ENCODE measurements at regions of chr11 and their contacts with region 1.

Region 1: DNA sequence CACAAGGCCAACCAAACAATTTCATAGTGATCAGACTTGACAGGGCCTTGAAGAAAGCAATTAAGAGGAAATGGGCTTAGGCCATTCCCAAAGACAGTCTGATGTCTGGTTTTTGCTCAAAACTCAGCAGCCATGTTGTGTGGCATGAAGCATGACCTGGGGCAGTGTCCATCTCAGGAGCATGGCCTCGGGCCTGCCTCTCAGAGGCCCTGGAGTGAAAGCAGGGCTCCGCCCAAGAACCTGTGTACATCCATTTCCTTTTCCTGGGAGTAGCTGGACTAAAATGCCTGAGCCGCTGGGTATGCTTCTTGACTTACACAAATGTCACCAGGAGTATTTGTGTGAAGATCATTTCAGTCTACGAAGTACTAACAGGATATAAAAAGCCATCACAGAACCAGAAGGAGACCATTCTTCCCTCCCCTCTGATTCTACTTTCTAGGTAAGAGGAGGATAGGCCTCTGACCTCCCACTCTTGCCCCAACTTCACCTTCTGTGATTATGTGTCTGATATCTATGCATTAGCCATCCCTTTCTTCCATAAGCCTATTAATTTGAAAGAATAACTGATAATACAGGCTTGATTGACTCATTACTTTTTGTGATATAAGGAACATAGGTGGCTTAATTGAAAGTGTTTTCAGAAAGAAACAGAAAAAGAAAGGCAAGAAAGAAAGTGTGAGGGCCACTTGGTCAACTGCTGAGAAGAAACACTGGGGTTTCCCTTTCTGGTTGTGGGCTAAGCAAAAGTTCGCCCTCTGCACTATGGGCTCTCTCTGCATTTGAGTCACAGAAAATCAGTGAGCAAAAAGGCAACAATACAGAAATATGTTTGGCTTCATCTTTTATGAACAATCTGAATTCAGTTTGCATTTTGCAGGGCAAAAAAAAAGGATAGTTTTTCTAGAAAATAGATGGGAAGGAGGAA is 188.6 kb upstream of the MTMR2 start:
- DNase-seq: no peak
- H3K4me3 ChIP-seq: no peak overlapping the region
- H3K27ac ChIP-seq: peak overlapping the region; percentile 58 to 80 (median 76)
- H3K4me1 ChIP-seq: peaks cover 0 to 33% (median 29%) of the 10 kb centered on the region in 4 donors
- H3K27me3 ChIP-seq: no peaks in the 10 kb centered on the region
- CTCF ChIP-seq: no peak
- EP300 ChIP-seq: no peak
- POLR2A ChIP-seq: no peak

Region 2: DNA sequence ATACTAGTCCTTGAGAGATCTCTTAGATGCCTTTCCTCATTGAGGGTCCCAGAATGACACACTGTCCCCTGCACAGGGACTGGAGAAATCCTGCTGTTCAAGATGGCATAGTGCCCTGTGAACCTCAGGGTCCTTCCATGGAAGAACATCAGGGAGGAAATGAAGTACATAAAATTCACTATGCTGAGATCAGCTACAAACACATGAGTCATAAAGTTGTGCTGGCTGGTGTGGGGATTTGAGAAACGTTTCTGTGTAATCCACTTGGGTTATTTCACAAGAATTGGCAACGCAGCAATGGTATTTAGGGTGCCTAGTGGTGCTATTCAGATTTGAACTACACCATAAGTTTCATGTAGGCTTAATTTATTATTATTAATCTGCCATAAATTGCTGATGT is 56.2 kb after region 1 on chr11:
- intact Hi-C with region 1: no loop called
- DNase-seq: peak; percentile 82
- H3K4me3 ChIP-seq: no peak overlapping the region
- H3K27ac ChIP-seq: peak overlapping the region in 3 of 4 donors; percentile 25 to 48 (median 30)
- H3K4me1 ChIP-seq: peaks cover 0 to 19% (median 3%) of the 10 kb centered on the region in 4 donors
- H3K27me3 ChIP-seq: no peaks in the 10 kb centered on the region
- CTCF ChIP-seq: no peak
- EP300 ChIP-seq: peak in 1 of 4 donors; percentile 22
- POLR2A ChIP-seq: no peak

Region 3: DNA sequence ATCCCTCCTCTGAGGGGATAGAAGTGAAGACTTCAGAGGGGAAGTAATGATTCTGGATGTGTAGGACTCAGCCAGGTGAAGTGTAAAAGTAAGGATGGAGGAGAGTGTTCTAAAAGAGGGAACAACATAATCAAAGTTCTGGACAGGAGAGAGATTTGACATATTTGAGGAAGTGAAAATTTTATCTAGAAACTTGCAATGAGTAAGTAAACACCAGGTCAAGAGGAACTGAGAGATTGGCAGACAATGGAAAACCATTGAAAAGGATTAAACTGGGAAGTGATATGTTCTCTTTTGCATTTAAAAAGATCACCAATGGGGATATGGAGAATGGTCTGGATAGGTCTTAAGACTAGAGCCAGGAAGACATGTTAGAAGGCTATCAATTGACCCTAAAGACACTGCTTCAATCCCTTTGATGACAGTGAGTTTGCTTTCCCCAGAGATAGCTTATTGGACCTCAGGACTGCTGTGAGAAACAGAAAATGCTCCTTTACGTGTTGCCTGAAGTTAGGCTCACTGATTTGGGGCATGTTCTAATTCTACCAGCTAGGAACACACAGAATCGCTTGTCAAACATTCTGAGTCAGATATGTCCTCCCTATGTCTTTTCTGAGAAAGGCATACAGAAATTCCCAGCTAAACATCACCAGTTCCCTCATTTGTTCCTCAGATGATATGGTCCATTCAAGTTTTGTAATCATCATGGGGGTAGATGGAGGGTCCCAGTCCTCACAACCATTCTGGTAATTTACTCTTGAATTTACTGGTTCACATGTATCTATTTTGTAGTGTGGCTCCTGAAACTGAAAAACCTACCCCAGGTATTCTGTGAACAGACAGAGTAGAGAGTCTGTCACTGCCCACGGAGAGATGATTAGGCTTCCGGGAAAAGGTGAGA is 85.6 kb after region 1 on chr11:
- intact Hi-C with region 1: loop called (anchors 10 kb)
- DNase-seq: no peak
- H3K4me3 ChIP-seq: no peak overlapping the region
- H3K27ac ChIP-seq: no peak overlapping the region
- H3K4me1 ChIP-seq: peaks cover 0 to 21% (median 13%) of the 10 kb centered on the region in 4 donors
- H3K27me3 ChIP-seq: no peaks in the 10 kb centered on the region
- CTCF ChIP-seq: no peak
- EP300 ChIP-seq: no peak
- POLR2A ChIP-seq: no peak